Mammary epithelial cell (primary cell): ENCODE measurements at regions of chr9 and their contacts with region 1.

Region 1: GRCh38 chr9:110116543-110116885 is 91.4 kb downstream of the C9orf152 start:
- DNase-seq: peak; percentile 86
- H3K4me3 ChIP-seq: no peak overlapping the region
- H3K27ac ChIP-seq: peak overlapping the region; percentile 75
- H3K4me1 ChIP-seq: peaks cover 46% of the 10 kb centered on the region
- H3K27me3 ChIP-seq: no peaks in the 10 kb centered on the region
- CTCF ChIP-seq: no peak

Region 2: DNA sequence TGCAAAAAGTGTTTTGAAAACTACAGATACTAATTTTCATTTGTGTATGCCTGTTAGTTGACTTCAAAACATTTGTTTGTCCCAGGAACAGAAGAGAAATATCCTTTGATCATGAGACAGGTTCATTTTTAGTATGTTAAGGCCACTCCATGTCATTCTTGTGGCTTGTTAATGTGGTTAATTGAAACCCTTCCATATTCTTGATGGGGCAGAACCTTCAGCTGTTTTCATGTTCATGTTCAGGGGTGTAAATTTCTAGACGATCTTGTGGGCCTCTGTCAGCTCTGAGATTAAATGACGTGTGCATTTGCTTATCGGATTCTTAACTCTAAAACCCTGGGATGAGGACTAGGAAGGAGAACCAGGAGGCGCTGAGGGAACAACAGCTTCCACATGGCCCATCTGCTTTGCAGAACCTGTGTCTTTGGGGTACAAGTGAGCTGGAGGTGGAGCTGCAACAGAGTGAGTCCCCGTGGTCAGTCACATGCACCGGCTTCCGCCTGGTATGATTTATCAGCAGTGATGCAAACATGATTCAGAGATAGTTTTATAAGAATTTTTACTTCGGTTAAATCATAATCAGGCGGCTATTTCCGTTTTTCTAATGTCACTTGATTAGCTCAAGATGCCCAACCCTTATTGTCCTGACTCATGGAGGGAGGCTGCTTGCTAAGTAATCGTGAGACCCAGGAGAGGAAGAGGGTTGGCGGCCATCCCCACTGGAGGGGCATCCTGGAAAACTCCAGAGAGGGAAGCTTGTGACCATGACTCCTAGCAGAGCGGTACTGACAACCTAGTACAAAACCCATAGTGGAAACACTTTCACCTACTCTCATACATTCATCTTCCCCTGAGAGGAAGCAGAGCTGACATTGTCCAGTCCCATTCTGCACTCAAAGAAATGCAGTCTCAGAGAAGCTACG is 46.9 kb before region 1 on chr9:
- CTCF ChIA-PET with region 1: no interaction called
- dilution Hi-C with region 1: loop called (anchors 5 kb)
- in situ Hi-C with region 1: no loop called
- intact Hi-C with region 1: no loop called
- DNase-seq: peak; percentile 17
- H3K4me3 ChIP-seq: no peak overlapping the region
- H3K27ac ChIP-seq: no peak overlapping the region
- H3K4me1 ChIP-seq: peaks cover 3% of the 10 kb centered on the region
- H3K27me3 ChIP-seq: no peaks in the 10 kb centered on the region
- CTCF ChIP-seq: no peak

Region 3: DNA sequence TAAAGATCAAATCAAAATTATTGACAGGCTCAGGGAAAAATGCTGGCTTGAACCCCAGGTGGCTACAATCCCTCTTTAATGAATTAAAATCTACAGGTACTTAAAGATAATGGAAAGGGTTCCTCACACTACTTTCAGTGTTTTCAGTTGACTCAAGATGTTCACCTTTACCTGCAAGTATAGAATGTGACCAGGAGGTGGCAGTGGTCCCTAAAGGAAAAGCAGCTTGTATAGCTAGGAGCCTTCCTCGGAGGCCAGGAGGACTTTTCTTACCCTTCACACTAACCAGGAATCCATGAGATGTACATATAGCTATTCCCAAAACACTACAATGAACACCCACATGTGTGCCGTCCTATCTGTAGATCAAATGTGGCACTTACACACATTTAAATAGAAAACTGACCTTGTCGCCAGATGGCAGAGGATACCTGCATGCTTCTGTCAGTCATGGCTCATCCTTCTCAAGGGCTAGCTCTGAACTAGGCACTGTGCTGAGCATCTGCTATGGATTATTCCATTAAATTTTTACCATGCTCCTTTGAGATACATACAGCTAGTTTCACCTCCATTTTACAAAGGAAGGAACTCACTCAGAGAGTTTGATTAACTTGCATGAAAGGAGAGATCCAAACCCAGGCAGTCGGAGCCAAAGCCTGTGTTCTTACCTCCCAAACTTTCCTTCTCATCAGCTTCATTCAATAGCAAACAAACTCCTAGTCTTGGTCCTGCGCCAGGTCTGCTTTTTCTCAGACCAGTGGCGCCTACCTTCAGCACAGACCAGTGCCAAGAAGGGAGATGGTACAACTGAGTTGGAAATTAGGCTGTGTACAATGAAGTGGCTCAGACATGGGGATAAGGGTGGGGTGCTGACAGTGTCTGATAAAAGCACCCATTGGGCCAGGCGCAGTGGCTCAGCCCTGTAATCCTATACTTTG is 67.0 kb after region 1 on chr9:
- CTCF ChIA-PET with region 1: no interaction called
- dilution Hi-C with region 1: no loop called
- in situ Hi-C with region 1: no loop called
- intact Hi-C with region 1: no loop called
- DNase-seq: peak; percentile 59
- H3K4me3 ChIP-seq: no peak overlapping the region
- H3K27ac ChIP-seq: no peak overlapping the region
- H3K4me1 ChIP-seq: peaks cover 34% of the 10 kb centered on the region
- H3K27me3 ChIP-seq: no peaks in the 10 kb centered on the region
- CTCF ChIP-seq: peak; percentile 81 to 83